ENCODE measurements at regions of chr21 and their contacts with region 1.

Region 1: DNA sequence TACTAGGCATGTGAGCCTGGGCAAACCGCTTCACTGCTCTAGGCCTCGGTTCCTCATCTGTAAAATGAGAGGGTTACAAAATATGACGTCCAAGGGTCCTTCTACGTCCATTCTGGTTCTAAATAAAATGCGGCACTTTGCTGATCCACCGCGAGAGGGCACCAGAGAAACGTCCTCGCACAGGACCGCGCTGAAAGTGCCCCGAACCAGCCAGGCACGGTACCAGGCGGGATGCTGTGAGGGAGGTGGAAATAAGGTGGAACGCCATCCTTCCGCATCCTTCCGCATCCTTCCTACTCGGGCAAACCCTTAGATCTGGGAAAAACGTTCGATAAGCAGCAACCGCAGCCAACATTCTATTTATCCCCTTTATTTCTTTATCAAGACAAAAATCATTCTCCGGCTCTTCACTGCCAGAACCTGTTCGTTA is 60.3 kb upstream of the KRTAP19-8 start:
- H3K4me3 Mint-ChIP-seq: no peak overlapping the region
- H3K27ac Mint-ChIP-seq: no peak overlapping the region
- H3K4me1 Mint-ChIP-seq: peaks cover 31% of the 10 kb centered on the region
- H3K27me3 Mint-ChIP-seq: peaks cover 9% of the 10 kb centered on the region

Region 2: DNA sequence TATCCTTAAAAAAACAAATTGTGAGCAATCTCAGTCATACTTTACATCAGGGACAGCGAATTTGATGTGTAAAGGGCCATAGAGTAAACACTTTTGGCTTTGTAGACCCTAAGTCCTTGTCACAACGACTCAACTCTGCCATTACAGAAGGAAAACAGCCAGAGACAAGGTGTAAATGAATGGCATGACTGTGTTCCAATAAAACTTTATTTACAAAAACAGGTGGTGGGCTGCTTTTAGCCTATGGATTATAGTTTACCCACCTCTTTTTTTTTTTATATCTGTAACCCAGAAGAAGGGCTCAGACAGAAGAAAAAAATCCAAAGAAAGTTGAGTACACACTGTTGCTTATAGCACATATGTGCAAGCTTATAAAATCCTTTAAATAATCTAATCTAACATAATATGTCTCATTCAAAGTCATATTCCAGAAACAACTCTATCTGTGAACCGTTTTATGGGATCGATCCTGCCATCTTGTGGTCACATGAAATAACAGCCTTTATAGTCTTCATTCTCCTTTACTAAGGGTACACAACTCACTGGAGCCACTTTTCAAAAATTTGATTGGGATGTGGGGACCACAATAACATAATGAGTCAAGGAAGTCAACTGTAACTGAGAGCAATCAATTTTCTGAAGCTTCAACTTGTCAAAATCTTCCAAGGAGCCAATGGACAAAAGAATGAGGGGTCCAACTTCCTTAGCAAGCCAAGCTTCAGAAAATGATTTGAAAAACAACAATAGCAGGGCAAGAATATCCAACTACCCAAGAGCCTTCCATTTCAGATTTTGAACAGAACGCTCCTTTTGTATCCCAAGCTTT is 81.9 kb after region 1 on chr21:
- intact Hi-C with region 1: loop called (anchors 1 kb)
- H3K4me3 Mint-ChIP-seq: no peak overlapping the region
- H3K27ac Mint-ChIP-seq: no peak overlapping the region
- H3K4me1 Mint-ChIP-seq: peaks cover 34% of the 10 kb centered on the region
- H3K27me3 Mint-ChIP-seq: no peaks in the 10 kb centered on the region

Region 3: DNA sequence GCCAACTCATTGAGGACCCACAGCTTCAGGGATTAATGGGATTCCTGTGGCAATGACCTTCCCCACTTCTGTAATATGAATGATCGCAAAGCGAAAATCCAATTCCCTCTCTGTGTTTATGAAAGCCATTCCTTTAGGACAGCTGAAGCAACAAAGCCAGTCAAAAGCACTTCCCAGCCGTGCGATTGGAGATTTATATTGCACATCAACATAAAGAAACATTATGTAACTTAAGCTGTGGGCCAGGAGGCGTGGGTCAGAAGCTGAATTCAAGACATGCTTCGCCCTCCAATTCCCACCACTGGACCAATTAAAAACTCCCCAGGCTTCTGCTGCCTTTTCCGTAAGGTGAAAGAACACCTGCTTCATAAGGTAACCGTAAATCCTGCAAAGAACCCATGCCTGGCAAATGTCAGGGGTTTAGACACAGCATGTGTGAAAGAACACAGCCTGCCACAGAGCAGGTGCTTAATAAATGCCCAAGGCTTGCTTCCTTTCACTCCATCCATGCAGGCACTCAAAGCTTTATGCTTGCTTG is 422.0 kb after region 1 on chr21:
- intact Hi-C with region 1: no loop called
- H3K4me3 Mint-ChIP-seq: no peak overlapping the region
- H3K27ac Mint-ChIP-seq: no peak overlapping the region
- H3K4me1 Mint-ChIP-seq: no peaks in the 10 kb centered on the region
- H3K27me3 Mint-ChIP-seq: no peaks in the 10 kb centered on the region

Measured in dendritic cell treated with granulocyte-macrophage colony-stimulating factor and Interleukin-4, amounts not matched to agents 40 ng/mL and 50 ng/mL, for 4 days (primary cell).